Head of caudate nucleus (tissue), 42 donors: ENCODE measurements at regions of chr7 and their contacts with region 1.

Region 1: GRCh38 chr7:130069978-130070860 is at the start of gene KLHDC10:
- DNase-seq: peak; percentile 94 to 99 (median 97)

Region 2: GRCh38 chr7:130430841-130431666 is 360.8 kb after region 1 on chr7:
- intact Hi-C with region 1: loop called (anchors 10 kb)
- DNase-seq: no peak

Region 3: DNA sequence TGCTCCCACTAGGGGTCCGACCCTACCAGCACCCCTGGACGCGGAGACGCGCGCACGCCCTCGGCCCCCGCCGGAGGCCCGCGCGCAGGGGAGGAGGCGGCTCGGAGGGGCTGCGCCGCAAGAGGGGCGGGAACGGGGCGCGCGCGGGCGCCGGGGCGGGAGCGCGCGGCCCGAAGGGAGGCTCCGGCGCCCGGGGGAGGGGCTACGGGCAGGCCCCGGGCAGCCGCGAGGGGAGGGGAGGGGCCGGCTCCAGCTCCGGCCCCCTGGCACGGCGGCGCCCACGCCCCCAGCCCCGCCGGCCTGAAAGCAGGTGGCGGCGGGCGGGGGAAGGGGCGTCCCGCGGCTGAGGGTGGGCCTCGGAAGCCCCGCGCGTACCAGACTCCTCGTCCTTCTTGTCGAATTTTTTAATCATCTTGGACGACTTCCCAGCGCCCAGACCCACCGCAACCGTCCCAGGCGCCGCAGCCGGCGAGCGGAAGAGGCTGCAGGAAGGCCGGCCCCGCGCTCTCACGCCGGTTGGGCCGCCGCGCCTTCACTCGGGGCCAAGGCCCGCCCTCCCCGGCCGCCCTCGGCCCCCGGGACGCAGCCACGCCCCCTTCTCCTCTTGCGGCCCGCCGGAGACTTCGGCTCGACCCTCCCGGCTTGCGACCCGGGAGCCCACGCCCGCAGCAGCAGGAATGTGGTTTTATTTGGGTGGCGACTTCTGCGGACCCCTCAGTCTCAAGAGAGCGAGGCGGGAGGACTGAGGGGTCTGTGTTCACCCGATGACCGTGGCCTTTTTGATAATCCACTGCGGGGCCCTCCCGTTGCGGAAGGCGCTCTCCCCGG is 598.3 kb after region 1 on chr7 and contains the start of gene COPG2:
- intact Hi-C with region 1: loop called (anchors 5 kb)
- DNase-seq: peak; percentile 51 to 93 (median 87)

Region 4: GRCh38 chr7:130721486-130722280 is 651.5 kb after region 1 on chr7:
- intact Hi-C with region 1: loop called (anchors 5 kb)
- DNase-seq: peak; percentile 44 to 89 (median 74)